Psoas muscle (tissue), 8 donors: ENCODE measurements at regions of chr11 and their contacts with region 1.

Region 1: GRCh38 chr11:62726915-62727763 is at the start of gene HNRNPUL2:
- DNase-seq: peak; percentile 99
- ATAC-seq: peak; percentile 92 to 94 (median 94)
- H3K4me3 ChIP-seq: peak within 1 kb of the TSS; percentile 76
- H3K27ac ChIP-seq: peak within 1 kb of the TSS; percentile 98
- H3K4me1 ChIP-seq: peaks cover 38% of the 10 kb centered on the region
- H3K27me3 ChIP-seq: no peaks in the 10 kb centered on the region
- CTCF ChIP-seq: no peak
- total RNA-seq, gene HNRNPUL2: 27.2 to 39.7 (median 31.4) TPM

Region 2: GRCh38 chr11:62147545-62147944 is 579.6 kb before region 1 on chr11:
- intact Hi-C with region 1: no loop called
- DNase-seq: no peak
- ATAC-seq: no peak
- H3K4me3 ChIP-seq: no peak overlapping the region
- H3K27ac ChIP-seq: no peak overlapping the region
- H3K4me1 ChIP-seq: no peaks in the 10 kb centered on the region
- H3K27me3 ChIP-seq: no peaks in the 10 kb centered on the region
- CTCF ChIP-seq: no peak

Region 3: DNA sequence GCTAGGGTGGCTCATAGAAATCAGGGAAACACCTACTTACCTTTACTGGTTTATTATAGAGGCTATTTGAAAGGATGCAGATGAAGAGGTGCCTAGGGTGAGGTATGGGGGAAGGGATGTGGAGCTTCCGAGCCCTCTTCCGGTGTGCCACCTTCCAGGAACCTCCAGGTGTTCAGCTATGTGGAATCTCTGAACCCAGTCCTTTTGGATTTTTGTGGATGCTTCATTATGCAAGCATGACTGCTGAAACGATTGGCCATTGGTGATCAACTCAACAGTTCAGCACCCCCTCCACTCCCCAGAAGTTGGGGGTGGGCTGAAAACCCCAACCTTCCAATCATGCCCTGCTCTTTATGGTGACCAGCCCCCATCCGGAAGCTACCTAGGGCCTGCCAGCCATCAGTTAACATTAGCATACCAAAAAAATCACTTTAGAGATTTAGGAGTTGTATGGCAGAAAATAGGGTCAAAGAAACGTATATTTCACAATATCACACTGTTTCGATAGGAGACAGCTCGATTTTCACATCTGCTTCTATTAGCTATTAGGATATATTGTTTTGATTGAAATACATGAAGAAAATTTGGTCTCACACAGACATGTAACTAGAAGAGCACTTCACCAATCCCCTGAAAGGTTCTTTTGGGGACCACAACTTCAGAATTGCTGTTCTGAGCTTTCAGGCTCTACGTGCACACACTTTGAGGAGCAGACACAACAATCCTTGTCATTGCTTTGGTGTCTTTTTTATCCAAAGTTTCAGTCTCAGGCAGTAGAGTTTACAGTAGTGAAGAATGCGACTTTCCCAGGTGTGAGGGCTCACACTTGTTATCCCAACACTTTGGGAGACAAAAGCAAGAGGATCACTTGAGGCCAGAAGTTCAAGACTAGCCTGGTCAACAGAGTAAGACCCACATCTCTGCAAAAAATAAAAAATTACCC is 31.0 kb after region 1 on chr11:
- intact Hi-C with region 1: loop called in 1 of 2 experiments (anchors 5 kb)
- DNase-seq: no peak
- ATAC-seq: no peak
- H3K4me3 ChIP-seq: no peak overlapping the region
- H3K27ac ChIP-seq: no peak overlapping the region
- H3K4me1 ChIP-seq: peaks cover 16% of the 10 kb centered on the region
- H3K27me3 ChIP-seq: no peaks in the 10 kb centered on the region
- CTCF ChIP-seq: no peak

Region 4: DNA sequence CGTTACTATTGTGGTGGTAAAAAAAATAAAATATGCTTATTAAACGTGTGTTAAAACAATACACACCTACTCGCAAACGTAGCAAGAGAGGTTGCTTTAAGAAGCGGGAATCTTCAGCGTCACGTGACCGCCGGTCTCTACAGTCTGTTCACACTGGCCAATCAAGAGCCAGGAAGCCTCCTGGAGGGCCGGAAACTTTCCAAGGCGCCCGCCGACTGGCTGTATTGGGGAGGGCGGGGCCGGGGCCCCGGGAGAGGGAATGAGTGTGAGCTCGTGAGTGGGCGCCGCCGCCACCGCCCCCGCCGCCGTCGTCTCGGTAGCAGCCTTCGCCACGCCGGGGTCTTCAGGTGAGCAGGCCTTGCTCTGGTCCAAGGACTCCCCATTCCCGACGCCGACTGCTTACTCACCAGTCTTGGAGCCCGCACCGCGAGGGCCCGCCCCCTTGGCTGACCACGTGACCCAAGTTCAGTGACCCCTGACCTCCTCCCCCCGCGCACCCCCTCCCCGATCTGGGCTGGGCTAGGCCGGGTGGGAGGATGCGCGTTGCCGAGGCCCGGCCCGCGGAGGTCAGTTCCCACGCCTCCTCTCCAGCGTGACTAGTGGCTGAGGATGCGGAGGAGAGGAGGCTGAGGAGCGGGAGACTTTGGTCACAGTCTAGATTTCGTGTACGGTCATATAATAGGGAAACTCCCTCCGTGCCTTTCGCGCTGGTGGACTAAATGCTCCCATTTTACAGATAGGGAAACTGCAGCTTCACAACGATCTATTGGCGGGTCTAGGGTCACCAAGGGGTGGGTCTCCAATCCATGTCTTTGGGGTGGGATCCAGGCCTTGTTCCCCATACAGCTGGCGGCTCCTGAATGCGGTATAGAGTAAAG is 44.2 kb after region 1 on chr11 and contains the start of gene TAF6L:
- intact Hi-C with region 1: loop called in 1 of 2 experiments (anchors 5 kb)
- DNase-seq: peak; percentile 98 to 99
- ATAC-seq: peak; percentile 96 to 98 (median 96)
- H3K4me3 ChIP-seq: peak within 1 kb of the TSS; percentile 86
- H3K27ac ChIP-seq: peak within 1 kb of the TSS; percentile 98
- H3K4me1 ChIP-seq: peaks cover 27% of the 10 kb centered on the region
- H3K27me3 ChIP-seq: no peaks in the 10 kb centered on the region
- CTCF ChIP-seq: no peak
- total RNA-seq, gene TAF6L: 13.5 to 19.9 (median 18.3) TPM